Calu3 (cell line): ENCODE measurements at regions of chr2 and their contacts with region 1.

Region 1: GRCh38 chr2:102615622-102616436 is 3.5 kb upstream of the SLC9A2 start:
- DNase-seq: peak; percentile 55
- H3K4me3 Mint-ChIP-seq: no peak overlapping the region
- H3K27ac Mint-ChIP-seq: no peak overlapping the region
- H3K4me1 Mint-ChIP-seq: no peaks in the 10 kb centered on the region
- H3K27me3 Mint-ChIP-seq: no peaks in the 10 kb centered on the region
- CTCF ChIP-seq: peak; percentile 85

Region 2: DNA sequence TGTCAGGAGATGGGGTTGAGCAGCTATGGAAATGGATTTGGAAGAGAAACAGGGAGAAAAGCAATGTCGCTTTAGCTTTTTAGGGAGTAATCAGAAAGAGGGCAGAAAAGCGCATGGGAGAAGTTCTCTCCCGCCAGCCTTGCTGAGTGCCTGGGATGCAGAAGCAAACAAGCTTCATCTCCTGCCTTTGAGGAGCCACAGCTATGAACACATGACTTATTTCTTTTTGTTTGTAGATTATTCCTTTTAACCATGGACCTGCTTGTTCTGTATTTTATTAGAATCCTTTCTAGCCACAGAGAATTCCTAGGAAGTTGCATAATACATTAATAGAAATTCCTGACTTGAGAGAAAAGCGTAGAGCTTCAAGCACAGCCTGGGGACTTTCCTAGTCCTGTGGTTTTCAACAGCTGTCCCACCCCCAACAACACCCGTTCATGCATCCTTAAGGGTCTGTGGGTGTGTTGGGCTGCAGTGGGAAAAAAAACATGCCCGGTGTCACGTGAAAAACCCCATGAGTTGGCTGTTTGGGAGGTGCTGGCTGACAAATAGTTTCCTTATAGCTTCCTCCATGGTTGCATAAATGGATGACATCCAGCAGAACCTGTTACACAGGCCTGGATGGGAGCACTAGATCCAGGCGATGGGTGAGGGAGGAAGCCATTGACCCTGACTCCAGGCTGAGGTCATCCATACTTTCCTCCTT is 127.9 kb before region 1 on chr2:
- CTCF ChIA-PET with region 1: no interaction called
- intact Hi-C with region 1: no loop called
- DNase-seq: peak; percentile 70
- H3K4me3 Mint-ChIP-seq: no peak overlapping the region
- H3K27ac Mint-ChIP-seq: peak overlapping the region; percentile 73
- H3K4me1 Mint-ChIP-seq: peaks cover 17% of the 10 kb centered on the region
- H3K27me3 Mint-ChIP-seq: no peaks in the 10 kb centered on the region
- CTCF ChIP-seq: no peak

Region 3: DNA sequence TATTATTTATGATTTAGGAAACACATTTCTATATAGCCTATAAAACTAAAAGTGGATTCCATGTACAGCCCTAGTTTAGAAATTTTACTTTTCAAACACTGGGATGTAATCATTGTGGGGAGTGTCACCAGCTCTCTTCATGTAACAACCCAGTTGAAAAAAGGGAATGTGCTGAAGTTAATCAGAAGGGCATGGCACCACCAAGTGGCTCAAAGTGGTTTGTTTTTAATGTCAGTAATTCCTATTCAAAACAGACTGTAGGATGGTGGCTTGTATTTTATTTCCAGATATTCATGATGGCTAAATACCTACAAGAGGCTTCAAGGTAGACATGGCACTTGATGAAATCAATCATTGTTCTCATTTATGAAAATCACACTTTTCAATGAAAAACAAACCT is 87.9 kb after region 1 on chr2:
- CTCF ChIA-PET with region 1: interaction called, 9 read pairs
- intact Hi-C with region 1: loop called (anchors 2 kb)
- DNase-seq: peak; percentile 37
- H3K4me3 Mint-ChIP-seq: no peak overlapping the region
- H3K27ac Mint-ChIP-seq: no peak overlapping the region
- H3K4me1 Mint-ChIP-seq: peaks cover 8% of the 10 kb centered on the region
- H3K27me3 Mint-ChIP-seq: no peaks in the 10 kb centered on the region
- CTCF ChIP-seq: no peak